Activated T-helper 1 cell treated with anti-CD3 and anti-CD28 coated beads, Interleukin-12 subunit alpha, Interleukin-12 subunit beta, Interleukin-2, Interleukin-4 antibody, amounts not matched to agents 30 ng/mL and 10 ng/mL and 1 ng/mL, durations not matched to agents 14 hours and 24 hours and 36 hours (primary cell): ENCODE measurements at regions of chr13 and their contacts with region 1.

Region 1: DNA sequence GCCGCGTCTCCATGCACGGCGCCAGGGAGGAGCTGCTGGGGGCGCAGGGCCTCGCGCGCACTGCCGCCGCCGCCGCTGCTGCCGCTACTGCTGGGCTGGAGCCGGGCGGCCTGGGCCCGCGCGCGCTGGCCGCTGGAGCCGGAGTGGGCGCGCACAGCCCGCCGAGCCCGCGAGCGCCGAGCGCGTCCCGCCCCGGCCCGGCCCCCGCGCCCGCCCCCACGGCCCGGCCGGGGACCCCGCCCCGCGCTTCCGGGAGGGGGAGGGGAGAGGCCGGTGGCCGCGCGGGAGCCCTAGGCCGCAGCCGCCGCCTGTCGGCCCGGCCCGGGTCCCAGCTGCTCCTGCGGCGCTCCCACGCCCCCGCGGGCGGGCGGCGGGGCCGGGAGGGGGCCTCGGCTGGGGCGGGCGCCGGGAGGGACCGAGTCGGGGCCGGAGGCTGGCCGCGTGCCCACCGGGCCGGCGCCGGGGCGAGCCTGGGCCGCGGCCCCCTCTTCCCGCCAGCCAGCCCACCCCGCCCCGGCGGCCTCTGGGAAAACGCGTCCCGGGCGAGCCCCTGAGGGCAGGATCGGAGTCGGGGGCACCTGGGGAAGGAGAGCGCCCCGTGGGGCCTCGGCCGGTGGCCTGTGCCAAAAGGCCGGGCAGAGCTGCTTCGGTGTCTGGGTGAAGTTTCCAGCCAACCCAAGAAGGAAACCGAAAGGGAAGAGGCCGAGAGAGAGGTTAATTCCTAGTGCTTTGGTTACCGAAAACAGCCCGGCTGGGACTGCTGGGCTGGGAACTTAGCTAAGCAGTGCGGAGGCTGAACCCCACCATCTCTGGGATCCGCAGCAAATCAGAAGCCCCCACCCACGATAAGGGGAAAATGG is at the start of gene STK24:
- DNase-seq: peak; percentile 66
- H3K4me3 Mint-ChIP-seq: peak within 1 kb of the TSS; percentile 98
- H3K27ac Mint-ChIP-seq: peak within 1 kb of the TSS; percentile 86
- H3K4me1 Mint-ChIP-seq: peaks cover 45% of the 10 kb centered on the region
- H3K27me3 Mint-ChIP-seq: no peaks in the 10 kb centered on the region
- total RNA-seq, gene STK24: 135 and 139 TPM in 2 replicates

Region 2: DNA sequence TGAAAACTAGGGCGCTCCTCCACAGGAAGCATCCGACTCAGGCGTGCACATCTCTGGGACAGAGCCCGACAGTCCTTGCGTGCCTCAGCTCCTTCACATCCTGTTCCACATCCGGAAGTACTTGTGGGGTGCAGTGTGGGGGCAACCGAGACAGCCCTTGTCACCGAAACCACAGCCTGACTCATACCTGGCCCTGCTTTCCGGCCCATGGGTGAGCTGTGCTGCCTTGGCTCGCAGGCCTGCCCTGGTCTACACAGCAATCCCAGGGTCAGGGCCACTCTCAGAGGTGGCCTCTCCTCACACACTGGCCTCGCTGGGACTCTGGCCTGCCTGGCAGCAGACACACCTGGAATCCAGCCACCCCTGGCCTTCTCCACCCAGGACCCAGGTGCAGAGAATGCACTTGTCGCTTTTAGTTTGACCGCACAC is 100.6 kb before region 1 on chr13:
- intact Hi-C with region 1: loop called (anchors 1 kb)
- DNase-seq: peak; percentile 86
- H3K4me3 Mint-ChIP-seq: peak overlapping the region; percentile 74
- H3K27ac Mint-ChIP-seq: peak overlapping the region; percentile 97
- H3K4me1 Mint-ChIP-seq: peaks cover 73% of the 10 kb centered on the region
- H3K27me3 Mint-ChIP-seq: no peaks in the 10 kb centered on the region

Region 3: GRCh38 chr13:98528663-98529570 is 48.3 kb before region 1 on chr13:
- intact Hi-C with region 1: loop called (anchors 1 kb)
- DNase-seq: no peak
- H3K4me3 Mint-ChIP-seq: peak overlapping the region; percentile 47
- H3K27ac Mint-ChIP-seq: peak overlapping the region; percentile 91
- H3K4me1 Mint-ChIP-seq: peaks cover 81% of the 10 kb centered on the region
- H3K27me3 Mint-ChIP-seq: no peaks in the 10 kb centered on the region

Region 4: GRCh38 chr13:98653463-98653985 is 76.3 kb after region 1 on chr13:
- intact Hi-C with region 1: loop called (anchors 2 kb)
- DNase-seq: peak; percentile 52
- H3K4me3 Mint-ChIP-seq: no peak overlapping the region
- H3K27ac Mint-ChIP-seq: no peak overlapping the region
- H3K4me1 Mint-ChIP-seq: peaks cover 4% of the 10 kb centered on the region
- H3K27me3 Mint-ChIP-seq: peaks cover 5% of the 10 kb centered on the region

Region 5: GRCh38 chr13:99033814-99034213 is 456.6 kb after region 1 on chr13:
- intact Hi-C with region 1: loop called (anchors 10 kb)
- DNase-seq: no peak
- H3K4me3 Mint-ChIP-seq: no peak overlapping the region
- H3K27ac Mint-ChIP-seq: no peak overlapping the region
- H3K4me1 Mint-ChIP-seq: peaks cover 23% of the 10 kb centered on the region
- H3K27me3 Mint-ChIP-seq: no peaks in the 10 kb centered on the region